ENCODE measurements at regions of chr15 and their contacts with region 1.

Region 1: DNA sequence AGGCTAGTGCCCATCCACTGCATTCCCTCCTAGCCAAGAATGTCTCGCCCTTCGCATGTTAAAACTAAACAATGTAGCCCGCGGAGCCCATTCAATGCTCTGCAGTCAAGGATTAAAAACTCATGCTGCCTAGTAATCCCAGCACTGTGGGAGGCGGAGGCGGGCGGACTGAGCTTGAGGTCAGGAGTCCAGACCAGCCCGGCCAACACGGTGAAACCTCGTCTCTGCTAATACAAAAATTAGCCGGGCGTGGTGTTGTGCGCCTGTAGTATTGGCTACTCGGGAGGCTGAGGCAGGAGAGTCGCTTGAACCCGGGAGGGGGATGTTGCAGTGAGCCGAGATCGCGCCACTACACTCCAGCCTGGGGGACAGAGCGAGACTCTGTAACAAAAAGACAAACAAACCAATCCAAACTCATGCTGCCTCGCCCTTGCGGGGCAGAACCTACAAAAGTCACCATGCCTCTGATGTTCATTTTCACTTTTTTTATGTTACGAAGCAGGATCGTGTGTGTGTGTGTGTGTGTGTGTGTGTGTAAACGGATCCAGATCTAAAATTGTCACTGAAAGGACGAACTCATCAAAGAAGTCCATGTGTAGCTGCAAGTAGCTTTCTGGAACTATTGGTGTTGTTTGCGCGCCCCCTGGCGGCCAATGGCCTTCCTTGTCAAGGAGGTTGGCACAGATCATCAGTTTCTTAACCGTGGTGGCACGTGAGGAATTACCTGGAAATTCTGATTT is 54.8 kb upstream of the SPESP1 start:
- DNase-seq: peak; percentile 98 to 99
- H3K4me3 ChIP-seq: peak overlapping the region; percentile 30
- H3K4me1 ChIP-seq: peaks cover 6% of the 10 kb centered on the region
- H3K27me3 ChIP-seq: peaks cover 45% of the 10 kb centered on the region

Region 2: DNA sequence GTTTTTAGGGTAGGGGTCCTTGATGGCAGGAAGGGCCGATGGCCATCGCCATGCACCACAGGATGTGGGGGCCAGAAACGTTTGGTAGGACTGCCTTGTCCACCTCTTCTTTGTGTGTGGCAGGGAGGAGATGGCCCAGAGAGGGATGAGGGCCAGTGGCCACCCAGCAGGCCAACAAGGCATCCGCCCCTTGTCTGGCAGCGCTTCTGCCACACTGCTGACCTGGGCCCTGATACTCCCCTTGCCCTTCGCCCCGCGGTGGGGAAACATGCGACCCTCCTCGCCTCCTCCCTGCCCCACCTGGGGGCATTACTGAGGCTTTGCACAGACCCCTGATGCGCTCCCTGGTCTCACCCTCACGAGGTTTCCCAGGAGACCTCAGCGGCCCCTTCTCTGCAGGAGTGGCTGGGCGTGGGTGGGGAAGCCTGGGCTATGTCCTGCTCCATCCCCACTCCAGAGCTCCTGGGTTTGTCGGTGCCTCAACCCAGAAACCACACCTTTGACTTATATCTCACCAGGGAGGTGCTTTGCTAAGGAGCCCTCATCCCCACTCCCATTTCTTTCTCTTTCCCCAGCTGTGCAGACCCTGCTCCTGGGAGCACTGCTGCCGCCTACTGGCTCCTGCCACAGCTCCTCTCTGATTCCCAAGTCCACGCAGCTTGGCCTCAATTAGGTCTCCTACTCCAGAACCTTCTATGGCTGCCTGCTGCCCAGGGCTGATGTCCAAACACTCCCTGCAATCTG is 559.3 kb before region 1 on chr15:
- in situ Hi-C with region 1: loop called (anchors 25 kb)
- DNase-seq: peak; percentile 44 to 73
- H3K4me3 ChIP-seq: no peak overlapping the region
- H3K4me1 ChIP-seq: no peaks in the 10 kb centered on the region
- H3K27me3 ChIP-seq: no peaks in the 10 kb centered on the region

Region 3: GRCh38 chr15:68550481-68551295 is 324.9 kb before region 1 on chr15:
- in situ Hi-C with region 1: loop called (anchors 5 kb)
- DNase-seq: peak; percentile 75 to 94
- H3K4me3 ChIP-seq: no peak overlapping the region
- H3K4me1 ChIP-seq: no peaks in the 10 kb centered on the region
- H3K27me3 ChIP-seq: peaks cover 25% of the 10 kb centered on the region

Region 4: GRCh38 chr15:68672781-68673205 is 202.8 kb before region 1 on chr15:
- in situ Hi-C with region 1: loop called (anchors 10 kb)
- DNase-seq: peak in 1 of 2 experiments; percentile 48
- H3K4me3 ChIP-seq: no peak overlapping the region
- H3K4me1 ChIP-seq: no peaks in the 10 kb centered on the region
- H3K27me3 ChIP-seq: no peaks in the 10 kb centered on the region

Region 5: GRCh38 chr15:68730471-68730919 is 145.1 kb before region 1 on chr15:
- in situ Hi-C with region 1: loop called (anchors 5 kb)
- DNase-seq: peak; percentile 67 to 70
- H3K4me3 ChIP-seq: no peak overlapping the region
- H3K4me1 ChIP-seq: no peaks in the 10 kb centered on the region
- H3K27me3 ChIP-seq: peaks cover 6% of the 10 kb centered on the region; the same call in 1 of the 2 replicates

Region 6: DNA sequence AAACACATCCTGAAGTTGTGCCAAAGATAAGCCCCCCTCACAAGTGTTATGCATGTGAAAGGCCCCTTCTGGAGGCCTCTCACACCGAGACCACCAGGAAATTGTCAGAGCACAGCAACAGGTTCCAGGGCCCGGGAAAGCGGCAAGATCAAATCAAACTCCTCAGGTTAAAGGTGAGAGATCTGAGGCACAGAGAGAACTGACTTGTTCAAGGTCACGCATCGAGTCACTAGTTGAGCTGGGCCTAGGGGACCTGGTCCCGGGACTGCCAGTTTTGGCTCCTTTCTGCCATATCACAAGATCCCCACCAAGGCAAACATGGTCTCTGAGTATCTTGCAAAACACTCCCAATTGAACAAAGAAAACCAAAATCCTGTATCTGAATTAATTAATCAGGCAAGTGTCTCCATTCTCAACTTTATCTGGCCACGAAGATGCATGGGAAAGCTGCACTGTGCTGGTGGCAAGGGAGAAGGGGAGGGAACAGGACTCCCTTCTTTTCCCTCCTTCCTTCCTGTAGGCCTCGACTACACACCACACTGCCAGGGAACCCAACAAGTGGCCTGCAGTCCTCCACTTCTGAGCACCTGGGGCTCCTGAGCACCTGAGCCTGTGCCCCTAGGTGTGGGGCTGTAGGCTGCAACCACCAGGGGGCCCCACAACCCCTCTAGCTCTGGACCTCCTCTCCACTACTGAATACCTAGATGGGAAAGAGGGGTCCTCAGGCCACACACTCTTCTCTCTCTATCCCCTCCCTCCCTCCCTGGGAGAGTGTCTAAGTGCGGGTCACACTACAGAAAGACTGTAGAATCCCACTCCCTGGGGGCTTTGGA is 92.1 kb before region 1 on chr15:
- in situ Hi-C with region 1: loop called (anchors 5 kb)
- DNase-seq: peak in 1 of 2 experiments; percentile 72
- H3K4me3 ChIP-seq: no peak overlapping the region
- H3K4me1 ChIP-seq: peaks cover 22% of the 10 kb centered on the region
- H3K27me3 ChIP-seq: no peaks in the 10 kb centered on the region

Measured in HAP-1 (cell line).